ENCODE measurements at regions of chr5 and their contacts with region 1.

Region 1: DNA sequence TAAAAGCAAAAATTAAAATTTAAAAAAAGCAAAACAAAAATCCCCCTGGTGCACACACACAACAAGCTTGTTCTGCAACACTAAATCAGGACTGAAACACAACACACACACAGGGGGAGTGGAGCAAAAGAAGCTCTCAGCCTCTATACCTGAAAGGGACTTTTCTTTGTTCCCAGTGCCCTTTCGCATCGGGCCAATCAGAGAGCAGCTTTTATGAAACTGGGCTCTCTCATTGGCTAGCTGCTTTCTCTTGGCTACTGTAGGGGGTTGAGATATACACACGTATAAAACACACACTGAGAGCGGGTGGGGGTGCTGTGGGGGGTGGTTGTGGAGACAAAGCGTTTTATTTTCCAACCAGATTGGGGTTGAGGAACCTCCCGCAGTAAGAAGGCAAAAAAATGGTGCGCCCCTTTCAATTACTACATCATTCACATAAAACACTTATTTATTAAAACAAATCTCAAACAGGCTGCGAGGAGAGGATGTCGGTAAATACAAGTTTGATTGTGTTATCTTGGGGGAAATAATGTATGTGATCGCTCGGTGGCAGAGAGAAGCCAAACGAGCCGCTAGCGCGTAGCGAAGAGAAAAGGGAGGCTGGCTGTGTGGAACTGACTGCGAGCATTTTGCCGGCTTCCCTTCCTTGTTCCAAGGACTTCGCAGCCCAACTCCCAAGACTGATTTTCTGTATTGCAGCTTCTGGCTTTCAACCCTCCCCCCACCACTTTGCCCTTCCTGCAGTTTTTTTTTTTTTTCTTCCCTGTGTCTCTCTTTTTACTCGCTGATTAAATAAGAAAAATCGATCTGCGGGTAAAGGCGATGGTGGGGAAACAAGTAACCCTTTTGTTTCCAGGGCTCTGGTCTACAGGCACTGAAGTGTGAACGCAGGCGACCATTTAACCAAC is 2.5 kb upstream of the ZNF608 start:
- DNase-seq: peak; percentile 78
- H3K4me3 ChIP-seq: peak overlapping the region; percentile 77
- H3K27ac ChIP-seq: peak overlapping the region; percentile 88
- H3K27me3 ChIP-seq: no peaks in the 10 kb centered on the region
- CTCF ChIP-seq: no peak

Region 2: DNA sequence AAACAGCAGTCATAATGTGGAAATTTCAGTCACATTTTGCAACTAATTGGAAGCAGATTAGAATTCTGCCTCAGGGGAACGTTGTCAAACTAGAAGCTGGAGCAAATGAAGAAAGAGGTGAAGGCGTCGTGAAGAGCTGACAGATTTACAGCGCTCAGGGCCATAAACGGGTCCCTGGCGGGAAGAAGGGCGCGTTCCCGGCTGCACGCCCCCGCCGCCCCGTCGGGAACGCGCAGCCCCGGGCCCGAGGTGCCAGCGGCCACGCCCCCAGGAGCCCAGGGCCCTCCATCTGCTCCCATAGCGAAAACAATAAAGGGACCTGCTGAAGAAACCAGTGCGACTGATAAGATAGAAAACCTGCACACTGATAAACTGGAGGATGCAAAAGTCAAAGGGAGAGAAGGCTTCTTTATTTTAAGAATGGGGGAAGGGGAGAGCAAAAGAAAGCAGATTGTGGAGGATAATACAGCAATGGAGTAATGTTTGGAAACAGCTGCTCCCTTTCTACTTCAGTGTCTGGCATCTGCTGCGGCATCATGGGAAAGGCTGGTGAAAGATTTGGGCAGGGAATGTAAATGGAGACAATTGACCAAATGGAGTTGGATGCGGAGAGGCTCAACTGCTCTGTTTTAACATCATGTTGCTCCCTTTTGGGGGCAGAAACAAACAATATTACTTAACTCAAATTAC is 13.6 kb before region 1 on chr5:
- CTCF ChIA-PET with region 1: no interaction called
- POLR2A ChIA-PET with region 1: interaction called, 10 read pairs
- DNase-seq: no peak
- H3K4me3 ChIP-seq: peak overlapping the region; percentile 39
- H3K27ac ChIP-seq: peak overlapping the region; percentile 11
- H3K27me3 ChIP-seq: no peaks in the 10 kb centered on the region
- CTCF ChIP-seq: no peak

Region 3: DNA sequence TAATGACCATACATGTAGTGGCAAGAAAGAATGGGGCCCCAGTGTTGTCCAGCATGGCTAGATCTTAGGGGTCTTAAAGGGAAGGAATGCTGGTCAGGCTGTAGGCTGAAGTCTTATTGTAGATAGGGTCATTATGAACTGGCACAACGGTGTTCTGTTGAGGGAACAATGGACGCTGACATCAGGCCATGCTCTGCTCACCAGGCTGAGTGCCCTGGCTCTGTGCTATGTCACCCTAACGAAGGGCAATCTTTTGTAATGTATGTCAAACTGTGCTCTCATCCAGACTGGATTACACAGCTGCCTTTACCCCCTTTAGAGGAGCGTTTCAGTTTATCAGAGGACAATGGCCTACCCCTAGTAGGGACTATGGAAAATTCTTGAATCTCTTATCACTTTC is 12.1 kb after region 1 on chr5:
- CTCF ChIA-PET with region 1: no interaction called
- POLR2A ChIA-PET with region 1: no interaction called
- DNase-seq: no peak
- H3K4me3 ChIP-seq: no peak overlapping the region
- H3K27ac ChIP-seq: no peak overlapping the region
- H3K27me3 ChIP-seq: no peaks in the 10 kb centered on the region
- CTCF ChIP-seq: no peak

Region 4: DNA sequence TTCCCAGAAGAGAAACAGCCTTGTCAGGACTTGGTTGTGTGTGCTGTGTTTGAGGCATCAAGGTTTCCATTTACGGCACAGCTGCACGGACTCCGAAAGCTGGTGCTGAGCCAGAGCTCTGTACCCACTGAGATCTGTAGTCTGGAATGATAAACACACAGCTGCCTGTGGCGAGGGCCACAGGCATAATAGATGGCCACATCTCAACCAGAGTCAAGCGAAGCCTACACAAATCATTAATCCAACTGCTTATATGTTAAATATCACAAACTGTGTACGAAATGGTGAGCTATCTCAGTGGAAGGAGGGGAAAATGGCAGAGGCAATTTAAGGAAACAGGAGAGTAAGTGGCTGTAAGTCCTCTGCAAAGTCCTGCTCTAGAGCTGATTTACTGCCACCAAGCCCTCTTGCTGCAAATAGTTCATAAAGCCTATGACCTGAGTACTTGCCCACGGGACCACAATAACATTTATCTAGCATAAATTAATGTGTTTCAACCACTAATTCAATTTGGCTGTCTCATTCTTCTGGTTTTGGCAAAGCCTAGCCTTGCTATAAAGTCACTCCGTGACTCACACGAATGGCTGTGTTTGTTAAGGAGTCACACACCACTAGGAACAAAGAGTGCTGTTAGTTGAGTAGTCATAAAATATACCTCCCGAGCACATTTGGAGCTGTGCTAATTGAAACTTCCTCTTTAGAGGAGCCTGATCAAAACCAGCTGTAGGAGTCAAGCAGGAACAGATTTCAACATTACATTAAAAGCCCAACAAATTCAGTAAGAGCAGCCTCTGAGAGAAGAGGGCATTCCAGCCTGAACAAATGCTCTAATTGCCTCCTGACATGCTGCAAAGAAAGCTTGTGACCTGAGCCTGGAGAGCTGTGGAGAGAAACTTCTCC is 736.1 kb after region 1 on chr5:
- CTCF ChIA-PET with region 1: no interaction called
- POLR2A ChIA-PET with region 1: interaction called, 16 read pairs
- DNase-seq: peak; percentile 96
- H3K4me3 ChIP-seq: no peak overlapping the region
- H3K27ac ChIP-seq: peak overlapping the region; percentile 63
- H3K27me3 ChIP-seq: no peaks in the 10 kb centered on the region
- CTCF ChIP-seq: no peak

Measured in AG04450 (cell line).